ENCODE measurements at regions of chr9 and their contacts with region 1.

Region 1: DNA sequence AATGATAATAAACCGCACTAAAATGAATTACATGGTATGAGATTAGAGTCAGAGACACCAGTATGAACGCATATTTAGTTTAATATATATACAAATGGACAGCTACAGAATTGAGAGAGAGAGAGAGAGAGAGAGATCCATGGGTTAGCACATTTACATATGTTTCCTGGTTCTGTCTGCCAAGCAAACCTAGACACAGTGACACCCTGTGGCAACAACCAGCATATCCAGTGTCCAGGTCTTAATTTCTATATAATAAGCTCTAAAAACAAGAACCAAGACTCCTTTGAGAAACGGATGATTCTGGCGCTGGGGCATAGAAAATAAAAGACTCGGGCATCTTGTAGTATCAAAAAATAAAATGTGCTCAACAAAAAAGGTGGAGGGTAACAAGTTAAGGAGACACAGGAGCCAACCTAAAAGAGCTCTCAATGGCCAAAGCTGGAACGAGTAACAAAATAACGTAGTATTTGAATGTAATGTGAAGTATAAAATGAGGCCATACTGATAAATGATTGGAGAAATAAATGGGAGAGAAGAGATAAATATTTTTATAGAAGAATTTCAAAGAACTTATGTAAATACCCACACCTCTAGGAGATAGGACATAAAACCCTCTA is 84.5 kb downstream of the RFX3 start:
- DNase-seq: peak; percentile 70
- H3K4me3 Mint-ChIP-seq: no peak overlapping the region
- H3K27ac Mint-ChIP-seq: no peak overlapping the region
- H3K4me1 Mint-ChIP-seq: no peaks in the 10 kb centered on the region
- H3K27me3 Mint-ChIP-seq: no peaks in the 10 kb centered on the region

Region 2: DNA sequence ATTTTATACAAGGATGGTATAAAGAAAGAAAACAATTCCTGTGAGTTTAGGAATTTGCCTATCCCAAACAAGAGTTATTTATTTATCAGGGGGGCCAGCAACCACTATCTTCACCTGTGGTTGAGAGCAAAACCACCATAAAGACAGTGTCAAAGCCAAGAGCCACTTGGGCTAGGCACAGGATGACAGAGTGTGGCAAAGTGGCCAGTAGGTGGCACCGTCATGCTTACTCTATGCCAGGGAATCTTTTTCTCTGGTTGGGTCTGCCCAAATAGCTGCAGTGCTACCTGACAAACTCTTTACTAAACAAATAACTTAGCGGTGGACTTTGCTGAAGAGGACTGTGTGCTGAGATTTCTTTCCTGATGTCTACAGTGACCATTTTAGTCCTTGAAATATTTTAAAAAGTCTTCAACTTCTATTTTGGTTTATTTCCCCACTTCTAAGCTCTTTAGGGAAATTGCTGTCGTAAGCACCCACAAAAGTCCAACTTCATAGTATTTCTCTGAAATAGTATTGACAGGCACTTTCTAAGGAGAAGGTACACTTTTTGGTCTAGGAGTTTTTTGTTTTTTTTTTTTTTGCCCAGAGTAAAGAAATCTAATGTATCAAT is 200.5 kb before region 1 on chr9:
- CTCF ChIA-PET with region 1: interaction called, 68 read pairs
- DNase-seq: peak; percentile 81
- H3K4me3 Mint-ChIP-seq: no peak overlapping the region
- H3K27ac Mint-ChIP-seq: no peak overlapping the region
- H3K4me1 Mint-ChIP-seq: no peaks in the 10 kb centered on the region
- H3K27me3 Mint-ChIP-seq: no peaks in the 10 kb centered on the region

Region 3: GRCh38 chr9:3331817-3332216 is 109.5 kb before region 1 on chr9:
- CTCF ChIA-PET with region 1: interaction called, 18 read pairs
- DNase-seq: no peak
- H3K4me3 Mint-ChIP-seq: no peak overlapping the region
- H3K27ac Mint-ChIP-seq: no peak overlapping the region
- H3K4me1 Mint-ChIP-seq: no peaks in the 10 kb centered on the region
- H3K27me3 Mint-ChIP-seq: no peaks in the 10 kb centered on the region